ENCODE measurements at regions of chr11 and their contacts with region 1.

Region 1: DNA sequence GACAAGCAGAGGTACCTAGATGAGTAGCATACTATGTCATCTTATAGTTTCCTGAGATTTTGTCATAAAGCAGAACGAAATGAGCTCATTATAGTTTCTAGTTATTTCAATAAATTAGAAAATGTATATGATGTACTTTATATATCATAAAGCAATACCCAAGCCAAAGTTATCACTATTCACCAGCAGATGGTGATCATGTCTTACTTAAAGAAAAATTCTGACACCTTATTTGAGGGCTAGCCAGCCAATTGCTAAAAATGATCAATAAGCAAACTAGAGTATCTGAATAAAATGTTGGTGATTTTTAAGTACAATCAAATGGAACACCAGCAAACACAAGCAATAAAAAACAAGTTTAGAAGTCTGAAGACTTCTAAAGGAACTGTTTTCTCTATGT is 44.1 kb downstream of the RSF1 start:
- DNase-seq: peak; percentile 8
- ATAC-seq: no peak
- H3K4me3 ChIP-seq: no peak overlapping the region
- H3K27ac ChIP-seq: no peak overlapping the region
- H3K4me1 ChIP-seq: peaks cover 6% of the 10 kb centered on the region; the same call in 1 of the 2 replicates
- H3K27me3 ChIP-seq: no peaks in the 10 kb centered on the region
- CTCF ChIP-seq: peak; percentile 54; the same call in 1 of the 2 replicates

Region 2: DNA sequence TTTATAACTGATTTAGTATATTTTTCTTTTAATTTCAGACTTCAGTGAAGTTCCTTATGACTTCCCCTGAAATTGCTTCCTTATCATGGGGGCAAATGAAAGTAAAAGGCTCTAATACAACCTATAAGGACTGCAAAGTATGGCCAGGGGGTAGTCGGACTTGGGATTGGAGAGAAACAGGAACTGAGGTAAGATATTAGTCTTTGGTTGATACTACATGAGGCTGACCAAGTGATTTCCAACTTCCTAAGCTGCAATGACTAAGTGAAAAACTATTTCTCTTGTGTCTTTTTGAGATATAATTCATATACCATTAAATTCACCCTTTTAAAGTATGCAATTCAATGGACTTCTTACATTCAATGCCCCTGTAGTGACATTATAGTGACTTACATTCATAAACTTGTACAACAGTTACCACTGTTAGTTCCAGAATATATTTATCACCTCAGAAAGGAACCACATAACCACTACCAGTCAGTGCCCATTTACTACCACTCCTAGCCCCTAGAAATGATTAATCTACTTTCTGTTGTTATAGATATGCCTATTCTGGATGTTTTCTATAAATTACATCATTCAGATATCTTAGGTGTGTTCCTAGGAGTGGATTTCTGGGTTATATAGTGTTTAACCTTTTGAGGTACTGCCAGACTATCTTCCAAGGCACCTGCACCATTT is 66.1 kb after region 1 on chr11:
- CTCF ChIA-PET with region 1: interaction called, 10 read pairs
- POLR2A ChIA-PET with region 1: no interaction called
- in situ Hi-C with region 1: no loop called
- intact Hi-C with region 1: no loop called
- DNase-seq: no peak
- ATAC-seq: no peak
- H3K4me3 ChIP-seq: no peak overlapping the region
- H3K27ac ChIP-seq: no peak overlapping the region
- H3K4me1 ChIP-seq: no peaks in the 10 kb centered on the region
- H3K27me3 ChIP-seq: no peaks in the 10 kb centered on the region
- CTCF ChIP-seq: no peak

Region 3: DNA sequence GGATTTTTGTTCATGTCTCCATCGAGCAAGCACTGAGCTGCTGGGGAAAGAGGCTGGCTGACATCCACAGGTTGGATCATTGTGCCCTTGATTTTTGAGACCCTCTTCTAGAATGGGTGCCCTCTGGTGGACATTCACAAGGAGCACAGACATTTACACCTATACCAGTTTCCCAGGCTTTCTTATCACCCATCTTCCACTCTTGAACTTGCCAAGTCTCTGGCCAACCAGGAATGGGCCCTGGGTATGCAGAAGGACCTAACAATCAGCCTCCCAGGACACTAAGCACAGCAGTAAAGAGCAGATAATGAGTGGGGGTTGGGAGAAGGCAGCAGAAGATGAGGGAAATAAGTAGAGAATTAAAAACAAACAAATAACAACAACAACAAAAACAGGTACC is 223.7 kb after region 1 on chr11:
- CTCF ChIA-PET with region 1: interaction called, 3 read pairs
- POLR2A ChIA-PET with region 1: no interaction called
- in situ Hi-C with region 1: no loop called
- intact Hi-C with region 1: loop called (anchors 1 kb)
- DNase-seq: peak; percentile 47
- ATAC-seq: peak; percentile 88
- H3K4me3 ChIP-seq: no peak overlapping the region
- H3K27ac ChIP-seq: no peak overlapping the region
- H3K4me1 ChIP-seq: peaks cover 3% of the 10 kb centered on the region; the same call in 1 of the 2 replicates
- H3K27me3 ChIP-seq: no peaks in the 10 kb centered on the region; the same call in 1 of the 2 replicates
- CTCF ChIP-seq: peak; percentile 93